CD4-positive, alpha-beta memory T cell (primary cell): ENCODE measurements at regions of chr22 and their contacts with region 1.

Region 1: GRCh38 chr22:21867528-21868266 is at the start of gene MAPK1:
- DNase-seq: peak; percentile 91 to 93 (median 92)
- H3K4me3 ChIP-seq: peak within 1 kb of the TSS; percentile 78 to 90
- H3K4me3 Mint-ChIP-seq: peak within 1 kb of the TSS; percentile 94 to 99 (median 96)
- H3K27ac ChIP-seq: peak within 1 kb of the TSS; percentile 85
- H3K27ac Mint-ChIP-seq: peak within 1 kb of the TSS; percentile 92 to 99 (median 96)
- H3K4me1 ChIP-seq: peaks cover 44% of the 10 kb centered on the region
- H3K4me1 Mint-ChIP-seq: peaks cover 34 to 54% (median 41%) of the 10 kb centered on the region in 4 donors
- H3K27me3 ChIP-seq: no peaks in the 10 kb centered on the region
- H3K27me3 Mint-ChIP-seq: no peaks in the 10 kb centered on the region
- total RNA-seq, gene MAPK1: 114 to 117 TPM

Region 2: GRCh38 chr22:21735200-21736076 is 132.3 kb before region 1 on chr22 and contains the start of gene YPEL1:
- CTCF ChIA-PET with region 1: no interaction called
- POLR2A ChIA-PET with region 1: interaction called, 11 read pairs
- intact Hi-C with region 1: loop called (anchors 1 kb)
- DNase-seq: peak; percentile 94 to 99 (median 97)
- H3K4me3 ChIP-seq: peak within 1 kb of the TSS; percentile 7 to 56
- H3K4me3 Mint-ChIP-seq: peak within 1 kb of the TSS; percentile 89 to 95 (median 94)
- H3K27ac ChIP-seq: peak within 1 kb of the TSS; percentile 63
- H3K27ac Mint-ChIP-seq: peak within 1 kb of the TSS; percentile 87 to 96 (median 93)
- H3K4me1 ChIP-seq: peaks cover 13% of the 10 kb centered on the region
- H3K4me1 Mint-ChIP-seq: peaks cover 15 to 21% (median 17%) of the 10 kb centered on the region in 4 donors
- H3K27me3 ChIP-seq: no peaks in the 10 kb centered on the region
- H3K27me3 Mint-ChIP-seq: no peaks in the 10 kb centered on the region
- total RNA-seq, gene YPEL1: 8.0 to 9.8 TPM

Region 3: GRCh38 chr22:21816787-21817496 is 50.8 kb before region 1 on chr22:
- CTCF ChIA-PET with region 1: no interaction called
- POLR2A ChIA-PET with region 1: interaction called, 12 read pairs
- intact Hi-C with region 1: loop called (anchors 1 kb)
- DNase-seq: peak; percentile 73 to 82 (median 75)
- H3K4me3 ChIP-seq: peak overlapping the region in 1 of 2 donors; percentile 16
- H3K4me3 Mint-ChIP-seq: peak overlapping the region; percentile 65 to 89 (median 80)
- H3K27ac ChIP-seq: peak overlapping the region; percentile 85
- H3K27ac Mint-ChIP-seq: peak overlapping the region; percentile 95 to 99 (median 97)
- H3K4me1 ChIP-seq: peaks cover 57% of the 10 kb centered on the region
- H3K4me1 Mint-ChIP-seq: peaks cover 51 to 78% (median 65%) of the 10 kb centered on the region in 4 donors
- H3K27me3 ChIP-seq: no peaks in the 10 kb centered on the region
- H3K27me3 Mint-ChIP-seq: no peaks in the 10 kb centered on the region

Region 4: DNA sequence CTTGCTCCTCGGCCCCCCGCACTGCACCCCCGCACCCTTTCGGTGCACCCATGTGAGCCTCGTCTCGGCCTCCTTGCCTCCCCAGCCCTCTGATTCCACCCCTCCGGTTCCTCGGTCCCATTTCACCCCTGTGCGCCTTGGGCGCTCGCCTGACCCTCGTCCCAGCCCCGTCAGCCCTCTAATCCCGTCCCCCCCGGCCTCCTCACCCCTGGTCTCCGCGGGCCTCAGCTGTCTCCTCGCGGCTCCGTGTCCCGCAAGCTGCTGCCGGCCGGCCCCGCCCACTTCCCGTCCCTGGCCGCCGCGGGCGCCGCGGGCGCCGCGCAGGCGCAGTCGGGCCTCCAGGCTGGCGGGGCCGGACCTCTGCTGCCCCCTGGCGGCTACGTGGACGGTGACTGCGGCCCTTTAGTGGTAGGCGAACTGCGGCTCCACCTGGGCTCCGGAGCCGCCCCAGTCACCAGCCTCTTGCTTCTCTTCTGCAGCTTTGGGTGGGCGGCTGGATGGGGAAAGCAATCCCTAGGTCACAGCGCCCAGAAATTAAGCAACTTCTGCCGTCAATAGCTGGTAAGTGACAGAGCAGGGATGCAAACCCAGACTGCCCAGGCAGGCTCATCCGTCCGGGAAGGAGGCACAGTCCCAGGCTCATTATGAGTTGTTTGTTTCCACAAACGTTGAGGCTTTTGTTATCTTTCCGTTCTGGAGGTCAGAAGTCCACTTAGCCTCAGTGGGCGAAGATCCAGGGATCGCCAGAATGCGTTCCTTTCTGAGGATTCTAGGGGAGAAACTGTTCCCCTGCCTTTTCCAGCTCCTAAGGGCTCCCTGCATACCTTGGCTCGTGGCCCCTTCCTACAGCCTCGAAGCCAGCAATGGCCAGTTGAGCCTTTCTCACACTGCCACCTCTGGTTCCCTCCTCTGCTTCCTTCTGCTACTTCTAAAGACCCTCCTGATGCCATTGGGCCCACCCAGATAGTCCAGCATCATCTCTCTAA is 85.2 kb after region 1 on chr22 and contains the start of gene PPM1F:
- CTCF ChIA-PET with region 1: no interaction called
- POLR2A ChIA-PET with region 1: no interaction called
- intact Hi-C with region 1: loop called (anchors 2 kb)
- DNase-seq: peak; percentile 80 to 96 (median 91)
- H3K4me3 ChIP-seq: peak within 1 kb of the TSS; percentile 37 to 70
- H3K4me3 Mint-ChIP-seq: peak within 1 kb of the TSS; percentile 82 to 90 (median 85)
- H3K27ac ChIP-seq: peak within 1 kb of the TSS; percentile 46
- H3K27ac Mint-ChIP-seq: peak within 1 kb of the TSS; percentile 46 to 86 (median 77)
- H3K4me1 ChIP-seq: peaks cover 24% of the 10 kb centered on the region
- H3K4me1 Mint-ChIP-seq: peaks cover 8 to 28% (median 11%) of the 10 kb centered on the region in 4 donors
- H3K27me3 ChIP-seq: no peaks in the 10 kb centered on the region
- H3K27me3 Mint-ChIP-seq: no peaks in the 10 kb centered on the region
- total RNA-seq, gene PPM1F: 23.3 to 25.4 TPM